Motor neuron (in vitro differentiated cells): ENCODE measurements at regions of chr22 and their contacts with region 1.

Region 1: GRCh38 chr22:32796865-32797573 is 4.5 kb upstream of the TIMP3 start:
- ATAC-seq: peak; percentile 35 to 81 (median 60)
- H3K4me3 ChIP-seq: no peak overlapping the region
- H3K27ac ChIP-seq: no peak overlapping the region
- H3K4me1 ChIP-seq: peaks cover 7 to 18% of the 10 kb centered on the region in 2 donors

Region 2: GRCh38 chr22:32528984-32529982 is 267.7 kb before region 1 on chr22:
- in situ Hi-C with region 1: loop called in 4 of 9 experiments (anchors 5 to 25 kb)
- ATAC-seq: peak; percentile 23 to 80 (median 65)
- H3K4me3 ChIP-seq: no peak overlapping the region
- H3K27ac ChIP-seq: no peak overlapping the region
- H3K4me1 ChIP-seq: peaks cover 28 to 35% of the 10 kb centered on the region in 2 donors

Region 3: GRCh38 chr22:32660292-32660691 is 136.7 kb before region 1 on chr22:
- in situ Hi-C with region 1: loop called in 2 of 9 experiments (anchors 10 to 25 kb)
- ATAC-seq: peak in 7 of 8 experiments; percentile 24 to 61 (median 49)
- H3K4me3 ChIP-seq: no peak overlapping the region
- H3K27ac ChIP-seq: no peak overlapping the region
- H3K4me1 ChIP-seq: peaks cover 0 to 4% of the 10 kb centered on the region in 2 donors

Region 4: GRCh38 chr22:32880893-32881596 is 84.0 kb after region 1 on chr22:
- in situ Hi-C with region 1: no loop called
- ATAC-seq: peak; percentile 17 to 93 (median 88)
- H3K4me3 ChIP-seq: peak overlapping the region in 1 of 5 donors; percentile 2
- H3K27ac ChIP-seq: peak overlapping the region; percentile 57 to 58
- H3K4me1 ChIP-seq: peaks cover 35 to 48% of the 10 kb centered on the region in 2 donors

Region 5: DNA sequence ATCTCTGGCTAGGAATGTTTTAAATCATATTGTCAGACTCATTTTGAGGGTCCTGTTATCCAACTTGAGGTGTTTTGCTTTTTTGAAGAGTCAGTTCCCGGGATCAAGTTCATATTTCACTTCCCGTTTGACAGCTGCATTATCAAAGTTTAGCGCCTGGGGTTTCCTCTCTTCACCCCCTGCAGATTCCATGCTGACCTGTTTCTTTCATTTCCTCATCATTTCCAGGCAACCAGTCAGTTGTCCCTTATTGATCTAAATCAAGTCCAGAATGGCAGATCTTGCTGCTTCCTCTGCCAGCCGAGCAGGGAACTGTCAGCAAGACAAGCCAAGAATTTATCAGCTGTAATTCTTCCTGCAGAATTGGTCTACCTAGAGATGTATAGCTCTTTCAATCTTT is 458.8 kb after region 1 on chr22:
- in situ Hi-C with region 1: no loop called
- ATAC-seq: no peak
- H3K4me3 ChIP-seq: no peak overlapping the region
- H3K27ac ChIP-seq: no peak overlapping the region
- H3K4me1 ChIP-seq: peaks cover 6 to 22% of the 10 kb centered on the region in 2 donors